ENCODE measurements at regions of chrX and their contacts with region 1.

Region 1: GRCh38 chrX:112841114-112841819 is 636 bp upstream of the AMOT start:
- DNase-seq: peak; percentile 77
- ATAC-seq: peak; percentile 98
- H3K4me3 Mint-ChIP-seq: peak overlapping the region; percentile 83
- H3K27ac Mint-ChIP-seq: peak overlapping the region; percentile 25
- H3K4me1 Mint-ChIP-seq: peaks cover 8% of the 10 kb centered on the region
- H3K27me3 Mint-ChIP-seq: peaks cover 8% of the 10 kb centered on the region

Region 2: DNA sequence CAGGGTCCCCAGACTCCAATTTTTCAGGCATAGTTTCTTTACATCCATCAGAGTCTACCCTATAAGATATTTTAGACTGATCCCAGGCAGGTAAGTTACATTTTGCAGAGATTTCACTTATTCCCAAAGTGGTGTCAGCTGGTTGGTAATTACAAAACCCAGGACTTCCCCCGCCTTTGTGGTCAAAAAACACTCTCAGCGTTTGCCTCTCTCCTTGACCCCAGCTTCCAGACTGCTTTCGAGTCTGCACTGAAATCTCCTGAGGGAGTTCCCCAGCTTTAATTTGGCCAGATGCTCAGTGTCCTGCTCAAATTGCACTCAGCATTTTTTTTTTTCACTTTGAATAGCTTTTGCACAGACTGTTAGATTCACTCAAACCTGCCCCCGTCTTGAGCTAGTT is 10.5 kb after region 1 on chrX:
- CTCF ChIA-PET with region 1: interaction called, 10 read pairs
- POLR2A ChIA-PET with region 1: interaction called, 4 read pairs
- DNase-seq: no peak
- ATAC-seq: no peak
- H3K4me3 Mint-ChIP-seq: no peak overlapping the region
- H3K27ac Mint-ChIP-seq: no peak overlapping the region
- H3K4me1 Mint-ChIP-seq: peaks cover 23% of the 10 kb centered on the region
- H3K27me3 Mint-ChIP-seq: peaks cover 6% of the 10 kb centered on the region

Measured in activated CD8-positive, alpha-beta T cell treated with anti-CD3 and anti-CD28 coated beads, Interleukin-2, amount 10 ng/mL, durations not matched to agents 7 days and 5 days (primary cell).